ENCODE measurements at regions of chr1 and their contacts with region 1.

Region 1: GRCh38 chr1:174262349-174263241 is 103.3 kb downstream of the RABGAP1L start:
- DNase-seq: peak; percentile 31
- H3K4me3 ChIP-seq: no peak overlapping the region
- H3K27ac ChIP-seq: no peak overlapping the region
- H3K27me3 ChIP-seq: no peaks in the 10 kb centered on the region
- CTCF ChIP-seq: peak; percentile 72

Region 2: GRCh38 chr1:174150499-174150898 is 112.1 kb before region 1 on chr1:
- in situ Hi-C with region 1: no loop called
- DNase-seq: no peak
- H3K4me3 ChIP-seq: no peak overlapping the region
- H3K27ac ChIP-seq: no peak overlapping the region
- H3K27me3 ChIP-seq: no peaks in the 10 kb centered on the region
- CTCF ChIP-seq: no peak

Region 3: GRCh38 chr1:174743654-174744561 is 481.3 kb after region 1 on chr1:
- in situ Hi-C with region 1: loop called (anchors 25 kb)
- DNase-seq: no peak
- H3K4me3 ChIP-seq: no peak overlapping the region
- H3K27ac ChIP-seq: no peak overlapping the region
- H3K27me3 ChIP-seq: no peaks in the 10 kb centered on the region
- CTCF ChIP-seq: peak; percentile 55

Measured in brain microvascular endothelial cell (primary cell).